Tibial artery (tissue), 4 donors: ENCODE measurements at regions of chr1 and their contacts with region 1.

Region 1: DNA sequence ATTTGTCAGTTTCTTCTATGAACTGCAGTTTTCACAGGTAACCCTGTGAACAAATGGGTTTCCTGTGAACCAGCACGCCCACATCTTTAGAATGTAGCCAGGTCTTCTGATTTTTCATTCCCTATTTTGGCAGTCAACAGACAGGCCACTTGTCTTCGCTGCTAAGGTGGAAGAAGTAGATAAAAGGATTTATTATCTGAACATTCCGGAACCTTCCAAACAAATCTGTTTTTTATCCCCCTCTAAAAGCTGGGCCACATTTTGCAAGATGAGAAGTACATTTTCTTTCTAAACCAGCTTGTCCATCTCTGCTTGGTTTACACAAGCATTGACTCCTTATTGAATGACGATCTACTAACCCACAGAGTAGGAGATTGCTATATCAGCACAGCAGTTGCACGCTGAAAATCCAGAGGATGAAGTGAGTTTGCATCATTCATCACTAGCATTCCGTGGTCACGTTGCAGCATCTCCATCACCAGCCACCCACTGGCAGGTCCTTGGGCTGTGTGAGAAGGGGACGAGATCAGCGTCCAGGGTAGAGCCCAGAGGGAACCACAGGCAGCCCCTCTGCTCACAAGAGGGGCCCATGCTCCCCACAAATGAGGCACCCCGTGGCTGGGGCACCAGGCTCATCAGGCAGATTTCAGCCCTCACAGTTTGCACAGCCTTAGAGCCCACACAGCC is 83.5 kb downstream of the TOMM20 start:
- DNase-seq: no peak
- H3K4me3 ChIP-seq: no peak overlapping the region
- H3K27ac ChIP-seq: peak overlapping the region in 1 of 2 donors; percentile 41
- H3K4me1 ChIP-seq: peaks cover 0 to 37% (median 29%) of the 10 kb centered on the region in 4 donors
- H3K27me3 ChIP-seq: no peaks in the 10 kb centered on the region
- CTCF ChIP-seq: no peak

Region 2: DNA sequence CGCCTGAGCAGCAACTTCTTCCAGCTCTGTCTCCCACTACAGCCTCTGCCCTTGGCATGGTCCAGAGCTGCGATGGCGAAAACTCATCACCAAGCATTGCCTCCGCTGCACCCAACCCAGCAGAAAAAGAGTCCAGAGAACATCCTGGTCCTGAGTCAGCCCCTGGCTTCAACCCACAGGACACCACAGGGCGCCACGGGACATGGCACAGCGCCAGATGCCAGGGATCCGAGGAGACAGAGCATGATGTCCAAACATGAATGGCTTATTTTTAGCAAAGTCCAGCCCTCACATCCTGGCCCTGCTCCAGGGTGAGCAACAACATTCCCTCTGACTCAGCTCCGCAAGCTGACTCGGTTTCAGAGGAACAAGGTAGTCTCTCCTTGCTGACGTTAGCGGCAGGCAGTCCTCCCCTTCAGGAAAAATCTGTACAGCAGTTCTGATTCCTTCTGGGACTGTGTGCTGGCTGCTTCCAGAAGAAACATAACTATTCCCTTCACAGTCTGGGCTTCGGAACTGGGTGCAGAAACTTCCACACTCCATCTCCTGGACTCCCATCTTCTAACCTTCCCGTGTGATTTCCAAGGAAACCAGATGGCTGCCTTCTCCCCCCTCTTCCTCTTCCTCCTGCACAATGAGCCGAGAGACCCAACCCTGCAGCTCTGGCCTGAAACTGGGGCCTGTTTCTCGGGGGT is 47.8 kb before region 1 on chr1:
- intact Hi-C with region 1: loop called (anchors 5 kb)
- DNase-seq: peak; percentile 100
- H3K4me3 ChIP-seq: peak overlapping the region in 1 of 2 donors; percentile 11
- H3K27ac ChIP-seq: peak overlapping the region; percentile 83 to 86
- H3K4me1 ChIP-seq: peaks cover 0 to 28% (median 25%) of the 10 kb centered on the region in 4 donors
- H3K27me3 ChIP-seq: no peaks in the 10 kb centered on the region
- CTCF ChIP-seq: no peak